ENCODE measurements at regions of chr1 and their contacts with region 1.

Region 1: GRCh38 chr1:36342481-36343478 is 19.3 kb upstream of the EVA1B start:
- DNase-seq: peak; percentile 87
- H3K4me3 Mint-ChIP-seq: no peak overlapping the region
- H3K27ac Mint-ChIP-seq: peak overlapping the region; percentile 70
- H3K4me1 Mint-ChIP-seq: peaks cover 9% of the 10 kb centered on the region
- H3K27me3 Mint-ChIP-seq: no peaks in the 10 kb centered on the region
- CTCF ChIP-seq: peak; percentile 89

Region 2: DNA sequence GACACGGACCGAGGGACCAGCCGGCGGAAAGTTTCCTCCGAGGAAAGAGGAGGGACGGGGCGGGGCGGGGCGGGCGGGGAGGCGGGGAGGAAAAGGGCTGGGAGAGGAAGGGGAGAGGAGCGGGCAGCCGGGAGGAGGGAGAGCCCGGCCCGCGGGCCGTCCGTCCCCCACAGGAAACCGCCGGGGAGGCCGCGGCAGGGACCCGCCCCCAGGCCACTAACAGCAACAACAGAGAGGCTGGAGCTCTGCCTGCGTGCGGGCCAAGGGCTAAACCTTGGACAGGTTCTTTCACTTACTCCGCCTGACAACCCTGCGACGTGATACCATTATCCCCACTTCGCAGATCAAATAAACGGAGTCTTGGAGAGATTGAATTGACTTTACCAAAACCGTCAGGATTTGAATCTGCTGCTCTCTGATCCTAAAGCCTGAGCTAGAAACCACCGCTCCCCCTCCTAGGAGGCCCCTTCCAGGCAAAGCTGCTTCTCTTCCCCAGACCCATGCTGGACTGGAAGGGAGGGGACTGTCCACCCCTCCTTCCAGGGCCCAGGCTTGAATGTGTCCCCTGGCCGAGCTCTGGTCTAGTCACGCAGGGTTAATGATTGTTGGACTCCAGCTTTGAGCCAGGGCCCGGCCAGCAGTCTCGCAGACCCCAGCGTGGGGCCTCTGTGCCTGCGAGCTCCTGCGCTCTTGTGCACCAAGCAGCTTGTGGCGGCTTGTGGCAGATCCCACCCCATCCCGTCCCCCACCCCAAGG is 19.0 kb before region 1 on chr1 and contains the start of gene EVA1B:
- CTCF ChIA-PET with region 1: interaction called, 12 read pairs
- intact Hi-C with region 1: no loop called
- DNase-seq: peak; percentile 73
- H3K4me3 Mint-ChIP-seq: peak within 1 kb of the TSS; percentile 76
- H3K27ac Mint-ChIP-seq: peak within 1 kb of the TSS; percentile 68
- H3K4me1 Mint-ChIP-seq: peaks cover 14% of the 10 kb centered on the region
- H3K27me3 Mint-ChIP-seq: no peaks in the 10 kb centered on the region
- CTCF ChIP-seq: no peak
- total RNA-seq, gene EVA1B: 10.1 and 11.2 TPM in 2 replicates

Region 3: DNA sequence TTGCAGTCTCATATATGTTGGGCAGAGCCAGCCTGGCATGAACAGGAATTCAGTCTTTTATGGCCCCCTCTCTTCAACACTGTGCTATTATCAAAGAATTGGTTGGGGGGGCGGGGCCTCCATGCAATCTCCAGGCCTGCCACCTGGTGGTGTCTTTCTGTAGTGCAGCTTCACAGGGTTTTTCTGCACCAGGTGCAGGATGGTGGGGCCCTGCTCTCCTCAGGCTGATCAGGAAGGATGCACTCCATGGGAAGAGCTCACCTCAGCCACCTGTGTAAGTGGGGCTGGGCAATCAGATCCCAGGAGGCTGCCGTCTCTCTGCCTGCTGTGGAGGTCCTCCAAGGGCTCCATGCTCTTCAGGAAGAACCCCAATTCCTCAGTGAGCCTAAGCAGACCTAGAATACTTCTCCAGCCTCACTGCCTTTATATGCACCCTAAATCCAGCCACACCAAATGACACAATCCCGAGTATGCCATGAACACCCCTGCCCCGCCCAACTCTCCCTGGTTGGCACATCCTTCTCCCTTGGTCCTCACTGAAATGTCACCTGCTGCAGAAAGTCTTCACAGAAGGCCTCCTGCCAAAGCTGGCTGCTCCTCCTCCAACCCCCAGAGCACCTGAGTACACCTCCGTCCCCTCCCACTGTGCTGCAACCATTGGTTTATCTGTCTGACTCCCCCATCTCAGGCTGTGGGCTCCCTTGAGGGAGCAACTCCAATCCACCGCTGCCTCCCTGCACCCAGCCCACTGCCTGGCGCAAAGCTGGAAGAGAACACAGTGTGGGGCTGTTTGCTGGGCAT is 26.5 kb after region 1 on chr1:
- CTCF ChIA-PET with region 1: interaction called, 29 read pairs
- intact Hi-C with region 1: loop called (anchors 2 kb)
- DNase-seq: peak; percentile 87
- H3K4me3 Mint-ChIP-seq: no peak overlapping the region
- H3K27ac Mint-ChIP-seq: peak overlapping the region; percentile 50
- H3K4me1 Mint-ChIP-seq: peaks cover 28% of the 10 kb centered on the region
- H3K27me3 Mint-ChIP-seq: no peaks in the 10 kb centered on the region
- CTCF ChIP-seq: peak; percentile 87

Region 4: DNA sequence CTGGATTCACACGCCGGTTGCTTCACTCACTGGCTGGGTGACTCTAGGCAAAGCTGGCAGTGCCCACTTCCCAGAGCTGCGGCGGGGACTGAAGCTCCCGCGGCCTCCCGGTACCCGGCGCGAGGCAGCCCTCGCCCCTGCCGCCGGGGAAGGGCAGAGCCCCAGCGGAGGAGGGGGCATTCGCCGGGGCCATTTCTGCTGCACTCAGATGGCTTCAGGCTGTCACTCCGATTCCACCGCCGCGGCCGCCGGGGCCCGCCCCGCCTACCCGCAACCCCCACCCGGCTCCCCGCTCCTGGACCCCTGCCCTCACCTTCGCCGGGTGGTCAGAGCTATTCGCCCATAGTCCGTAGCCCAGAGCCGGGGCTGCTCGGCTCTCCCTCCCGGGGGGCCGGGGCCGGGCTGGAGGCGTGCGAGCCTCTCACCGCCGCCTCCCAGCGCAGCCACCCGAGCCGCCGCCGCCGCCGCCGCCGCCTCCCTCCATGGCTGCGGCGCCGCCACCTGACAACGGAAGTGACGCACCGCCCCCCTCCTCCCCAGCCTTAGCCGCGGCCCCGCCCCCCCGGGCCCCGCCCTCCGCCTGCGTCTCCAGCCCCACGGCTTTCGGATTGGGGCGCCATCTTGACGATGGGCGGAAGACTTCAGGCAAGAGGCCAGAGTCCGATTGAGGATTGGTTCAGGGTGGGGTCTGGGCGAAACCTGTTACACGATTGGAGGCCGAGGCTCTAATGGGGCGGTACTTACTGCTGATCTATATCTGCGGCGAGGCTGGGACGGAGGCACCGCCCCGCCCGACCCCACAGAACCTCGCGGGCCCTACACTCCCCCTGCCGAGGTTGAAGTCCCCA is 42.9 kb after region 1 on chr1 and contains the start of gene STK40:
- CTCF ChIA-PET with region 1: interaction called, 11 read pairs
- intact Hi-C with region 1: no loop called
- DNase-seq: peak; percentile 96
- H3K4me3 Mint-ChIP-seq: peak within 1 kb of the TSS; percentile 90
- H3K27ac Mint-ChIP-seq: peak within 1 kb of the TSS; percentile 100
- H3K4me1 Mint-ChIP-seq: peaks cover 59% of the 10 kb centered on the region
- H3K27me3 Mint-ChIP-seq: no peaks in the 10 kb centered on the region
- CTCF ChIP-seq: no peak
- total RNA-seq, gene STK40: 44.5 and 52.1 TPM in 2 replicates

Region 5: GRCh38 chr1:36420836-36421664 is 78.3 kb after region 1 on chr1:
- CTCF ChIA-PET with region 1: interaction called, 11 read pairs
- intact Hi-C with region 1: loop called (anchors 1 kb)
- DNase-seq: peak; percentile 94
- H3K4me3 Mint-ChIP-seq: no peak overlapping the region
- H3K27ac Mint-ChIP-seq: peak overlapping the region; percentile 37
- H3K4me1 Mint-ChIP-seq: peaks cover 19% of the 10 kb centered on the region
- H3K27me3 Mint-ChIP-seq: no peaks in the 10 kb centered on the region
- CTCF ChIP-seq: peak; percentile 95

Region 6: GRCh38 chr1:36924282-36924811 is 581.6 kb after region 1 on chr1:
- CTCF ChIA-PET with region 1: no interaction called
- intact Hi-C with region 1: no loop called
- DNase-seq: peak; percentile 52
- H3K4me3 Mint-ChIP-seq: no peak overlapping the region
- H3K27ac Mint-ChIP-seq: no peak overlapping the region
- H3K4me1 Mint-ChIP-seq: no peaks in the 10 kb centered on the region
- H3K27me3 Mint-ChIP-seq: peaks cover 91% of the 10 kb centered on the region
- CTCF ChIP-seq: no peak